Heart left ventricle (tissue), 16 donors: ENCODE measurements at regions of chrX and their contacts with region 1.

Region 1: GRCh38 chrX:45022150-45022549 is 149.2 kb downstream of the KDM6A start:
- DNase-seq: no peak
- ATAC-seq: no peak
- H3K4me3 ChIP-seq: no peak overlapping the region
- H3K27ac ChIP-seq: no peak overlapping the region
- H3K4me1 ChIP-seq: peaks cover 0 to 50% (median 14%) of the 10 kb centered on the region in 12 donors
- H3K27me3 ChIP-seq: no peaks in the 10 kb centered on the region
- CTCF ChIP-seq: no peak
- POLR2A ChIP-seq: no peak

Region 2: DNA sequence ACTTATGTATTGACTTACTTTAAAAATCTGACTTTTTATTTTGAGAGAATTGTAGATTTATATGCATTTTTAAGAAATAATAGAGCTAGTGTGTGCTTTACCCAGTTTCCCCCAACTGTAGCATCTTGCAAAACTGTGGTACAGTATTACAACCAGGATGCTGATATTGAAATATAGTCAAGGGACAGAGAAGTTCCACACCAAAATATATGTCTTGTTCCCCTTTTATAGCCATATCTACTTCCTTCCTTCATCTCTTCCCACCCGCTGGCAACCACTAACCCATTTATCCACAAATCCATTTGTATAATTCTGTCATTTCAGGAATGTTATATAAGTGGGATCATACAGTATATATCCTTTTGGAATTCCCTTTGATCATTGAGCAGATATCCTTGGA is 132.3 kb before region 1 on chrX:
- intact Hi-C with region 1: loop called in 1 of 10 experiments (anchors 10 kb)
- DNase-seq: no peak
- ATAC-seq: no peak
- H3K4me3 ChIP-seq: no peak overlapping the region
- H3K27ac ChIP-seq: peak overlapping the region in 1 of 12 donors; percentile 4
- H3K4me1 ChIP-seq: peaks cover 0 to 34% (median 0%) of the 10 kb centered on the region in 12 donors
- H3K27me3 ChIP-seq: no peaks in the 10 kb centered on the region
- CTCF ChIP-seq: no peak
- POLR2A ChIP-seq: no peak

Region 3: GRCh38 chrX:44961817-44962607 is 60.1 kb before region 1 on chrX:
- intact Hi-C with region 1: loop called in 1 of 10 experiments (anchors 10 kb)
- DNase-seq: no peak
- ATAC-seq: no peak
- H3K4me3 ChIP-seq: no peak overlapping the region
- H3K27ac ChIP-seq: peak overlapping the region in 7 of 12 donors; percentile 14 to 67 (median 44)
- H3K4me1 ChIP-seq: peaks cover 0 to 65% (median 22%) of the 10 kb centered on the region in 12 donors
- H3K27me3 ChIP-seq: no peaks in the 10 kb centered on the region
- CTCF ChIP-seq: no peak
- POLR2A ChIP-seq: no peak

Region 4: GRCh38 chrX:45007598-45007997 is 14.6 kb before region 1 on chrX:
- intact Hi-C with region 1: no loop called
- DNase-seq: no peak
- ATAC-seq: no peak
- H3K4me3 ChIP-seq: no peak overlapping the region
- H3K27ac ChIP-seq: no peak overlapping the region
- H3K4me1 ChIP-seq: peaks cover 0 to 30% (median 8%) of the 10 kb centered on the region in 12 donors
- H3K27me3 ChIP-seq: no peaks in the 10 kb centered on the region
- CTCF ChIP-seq: no peak
- POLR2A ChIP-seq: no peak